CD8-positive, alpha-beta T cell (primary cell): ENCODE measurements at regions of chr4 and their contacts with region 1.

Region 1: DNA sequence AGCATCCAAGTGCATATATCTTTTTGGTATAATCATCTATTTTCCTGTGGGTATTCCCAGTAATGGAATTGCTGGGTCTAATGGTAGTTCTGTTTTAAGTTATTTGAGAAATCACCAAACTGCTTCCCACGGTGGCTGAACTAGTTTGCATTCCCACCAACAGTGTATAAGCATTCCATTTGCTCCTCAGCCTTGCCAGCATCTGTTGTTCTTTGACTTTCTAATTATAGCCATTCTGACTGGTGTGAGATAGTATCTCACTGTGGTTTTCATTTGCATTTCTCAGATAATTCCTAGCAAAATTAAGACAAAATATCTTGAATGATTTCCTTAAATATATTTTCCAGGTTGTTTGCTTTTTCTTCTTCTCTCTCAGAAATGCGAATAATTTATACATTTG is 341.1 kb downstream of the GBA3 start:
- DNase-seq: no peak
- ATAC-seq: no peak
- H3K4me3 ChIP-seq: no peak overlapping the region
- H3K4me3 Mint-ChIP-seq: no peak overlapping the region
- H3K27ac ChIP-seq: no peak overlapping the region
- H3K27ac Mint-ChIP-seq: no peak overlapping the region
- H3K4me1 ChIP-seq: no peaks in the 10 kb centered on the region
- H3K4me1 Mint-ChIP-seq: no peaks in the 10 kb centered on the region
- H3K27me3 ChIP-seq: no peaks in the 10 kb centered on the region
- H3K27me3 Mint-ChIP-seq: no peaks in the 10 kb centered on the region
- CTCF ChIP-seq: no peak

Region 2: GRCh38 chr4:22587253-22587652 is 446.5 kb before region 1 on chr4:
- CTCF ChIA-PET with region 1: no interaction called
- POLR2A ChIA-PET with region 1: no interaction called
- intact Hi-C with region 1: loop called in 1 of 2 experiments (anchors 5 kb)
- DNase-seq: no peak
- ATAC-seq: no peak
- H3K4me3 ChIP-seq: no peak overlapping the region
- H3K4me3 Mint-ChIP-seq: no peak overlapping the region
- H3K27ac ChIP-seq: no peak overlapping the region
- H3K27ac Mint-ChIP-seq: no peak overlapping the region
- H3K4me1 ChIP-seq: no peaks in the 10 kb centered on the region
- H3K4me1 Mint-ChIP-seq: no peaks in the 10 kb centered on the region
- H3K27me3 ChIP-seq: no peaks in the 10 kb centered on the region
- H3K27me3 Mint-ChIP-seq: no peaks in the 10 kb centered on the region
- CTCF ChIP-seq: no peak

Region 3: GRCh38 chr4:23547601-23548000 is 513.8 kb after region 1 on chr4:
- CTCF ChIA-PET with region 1: no interaction called
- POLR2A ChIA-PET with region 1: no interaction called
- intact Hi-C with region 1: no loop called
- DNase-seq: no peak
- ATAC-seq: no peak
- H3K4me3 ChIP-seq: no peak overlapping the region
- H3K4me3 Mint-ChIP-seq: no peak overlapping the region
- H3K27ac ChIP-seq: no peak overlapping the region
- H3K27ac Mint-ChIP-seq: no peak overlapping the region
- H3K4me1 ChIP-seq: no peaks in the 10 kb centered on the region
- H3K4me1 Mint-ChIP-seq: no peaks in the 10 kb centered on the region
- H3K27me3 ChIP-seq: no peaks in the 10 kb centered on the region
- H3K27me3 Mint-ChIP-seq: no peaks in the 10 kb centered on the region
- CTCF ChIP-seq: no peak